ENCODE measurements at regions of chr3 and their contacts with region 1.

Region 1: GRCh38 chr3:128753715-128754114 is 27.7 kb downstream of the RAB7A start:
- DNase-seq: no peak
- H3K4me3 ChIP-seq: no peak overlapping the region
- H3K4me3 Mint-ChIP-seq: no peak overlapping the region
- H3K27ac Mint-ChIP-seq: no peak overlapping the region
- H3K4me1 ChIP-seq: no peaks in the 10 kb centered on the region
- H3K4me1 Mint-ChIP-seq: peaks cover 7% of the 10 kb centered on the region
- H3K27me3 ChIP-seq: no peaks in the 10 kb centered on the region
- H3K27me3 Mint-ChIP-seq: no peaks in the 10 kb centered on the region
- CTCF ChIP-seq: no peak

Region 2: GRCh38 chr3:128714887-128715491 is 38.7 kb before region 1 on chr3:
- CTCF ChIA-PET with region 1: interaction called, 10 read pairs
- POLR2A ChIA-PET with region 1: no interaction called
- intact Hi-C with region 1: no loop called
- DNase-seq: no peak
- H3K4me3 ChIP-seq: no peak overlapping the region
- H3K4me3 Mint-ChIP-seq: no peak overlapping the region
- H3K27ac Mint-ChIP-seq: no peak overlapping the region
- H3K4me1 ChIP-seq: peaks cover 3% of the 10 kb centered on the region
- H3K4me1 Mint-ChIP-seq: peaks cover 11% of the 10 kb centered on the region
- H3K27me3 ChIP-seq: no peaks in the 10 kb centered on the region
- H3K27me3 Mint-ChIP-seq: no peaks in the 10 kb centered on the region
- CTCF ChIP-seq: no peak